Panc1 (cell line): ENCODE measurements at regions of chr13 and their contacts with region 1.

Region 1: GRCh38 chr13:46160471-46161066 is 21.4 kb downstream of the LCP1 start:
- DNase-seq: peak; percentile 30
- ATAC-seq: no peak
- H3K4me3 ChIP-seq: no peak overlapping the region
- H3K27ac ChIP-seq: no peak overlapping the region
- H3K4me1 ChIP-seq: no peaks in the 10 kb centered on the region
- H3K27me3 ChIP-seq: no peaks in the 10 kb centered on the region; the same call in none of the 2 replicates
- CTCF ChIP-seq: peak; percentile 79

Region 2: DNA sequence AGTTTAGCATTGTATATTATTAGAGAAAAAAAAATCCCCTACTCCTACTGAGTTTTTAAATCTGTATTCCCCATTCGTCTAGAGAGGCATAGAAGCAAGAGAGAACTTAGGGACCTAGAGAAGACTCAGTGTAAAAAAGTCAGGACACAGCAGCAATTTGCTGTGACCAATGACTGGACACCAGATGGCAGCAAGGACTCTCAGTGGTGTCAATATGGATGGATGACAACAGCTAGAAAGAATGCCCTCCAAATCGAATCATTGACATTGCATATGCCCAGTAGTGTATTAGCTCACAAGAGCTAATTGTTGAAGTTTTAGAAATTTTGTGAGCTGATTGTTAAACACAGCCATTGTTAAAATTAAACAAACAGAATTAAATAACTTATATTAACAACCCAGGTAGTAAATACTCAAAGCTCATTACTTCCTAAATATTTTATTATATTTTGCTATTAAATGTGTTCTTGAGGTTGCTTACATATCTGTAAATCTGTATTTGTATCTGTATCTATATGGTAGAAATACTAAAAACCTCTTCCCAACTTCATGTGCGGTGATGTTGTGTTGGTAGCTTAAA is 353.0 kb before region 1 on chr13:
- CTCF ChIA-PET with region 1: no interaction called
- POLR2A ChIA-PET with region 1: no interaction called
- in situ Hi-C with region 1: no loop called
- intact Hi-C with region 1: loop called (anchors 5 kb)
- DNase-seq: peak; percentile 28
- ATAC-seq: peak; percentile 74; the same call in 1 of the 2 replicates
- H3K4me3 ChIP-seq: no peak overlapping the region
- H3K27ac ChIP-seq: no peak overlapping the region
- H3K4me1 ChIP-seq: no peaks in the 10 kb centered on the region
- H3K27me3 ChIP-seq: no peaks in the 10 kb centered on the region
- CTCF ChIP-seq: peak; percentile 68

Region 3: DNA sequence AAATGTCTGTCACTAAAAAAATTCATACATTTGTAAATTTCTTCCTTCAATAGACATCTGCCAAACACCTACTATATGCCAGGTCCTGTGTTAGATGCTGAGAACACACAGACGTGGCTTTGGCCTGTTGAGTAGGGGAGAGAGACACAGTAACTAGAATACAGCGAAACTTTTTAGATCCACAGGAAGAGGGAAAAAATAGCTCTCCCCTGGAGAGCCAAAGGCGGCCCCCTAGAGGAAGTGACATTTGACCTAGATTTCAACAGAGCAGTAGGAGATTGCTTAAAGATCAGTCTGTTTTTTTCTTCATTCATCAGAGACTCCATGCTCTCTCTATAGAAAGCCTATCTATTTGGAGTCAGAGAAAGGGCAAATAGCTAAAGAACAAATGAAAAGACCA is 10.1 kb after region 1 on chr13:
- CTCF ChIA-PET with region 1: interaction called, 4 read pairs
- POLR2A ChIA-PET with region 1: interaction called, 11 read pairs
- in situ Hi-C with region 1: no loop called
- intact Hi-C with region 1: no loop called
- DNase-seq: no peak
- ATAC-seq: no peak
- H3K4me3 ChIP-seq: no peak overlapping the region
- H3K27ac ChIP-seq: no peak overlapping the region
- H3K4me1 ChIP-seq: no peaks in the 10 kb centered on the region
- H3K27me3 ChIP-seq: no peaks in the 10 kb centered on the region; the same call in 1 of the 2 replicates
- CTCF ChIP-seq: no peak